Right cardiac atrium (tissue), 5 donors: ENCODE measurements at regions of chr12 and their contacts with region 1.

Region 1: DNA sequence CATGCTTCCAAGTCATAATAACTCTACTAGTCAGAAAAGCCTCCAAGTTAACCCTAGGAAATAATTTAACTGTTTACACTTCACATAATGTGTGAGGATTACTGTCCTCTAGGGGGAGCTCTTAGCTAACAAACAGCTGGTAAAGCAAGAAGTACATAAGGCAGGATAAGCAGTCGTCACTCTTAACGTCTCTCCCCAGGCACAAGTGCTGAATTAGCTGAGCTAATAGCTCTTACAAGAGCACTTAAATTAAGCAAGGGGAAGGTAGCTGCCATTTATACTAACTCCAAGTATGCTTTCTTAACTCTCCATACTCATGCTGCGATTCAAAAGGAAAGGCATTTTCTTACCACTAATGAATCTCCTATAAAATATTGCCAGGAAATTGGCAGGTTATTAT is 79.3 kb upstream of the TSPAN11 start:
- DNase-seq: no peak
- ATAC-seq: peak in 1 of 2 donors; percentile 46
- H3K4me3 ChIP-seq: no peak overlapping the region
- H3K27ac ChIP-seq: no peak overlapping the region
- H3K4me1 ChIP-seq: peaks cover 3% of the 10 kb centered on the region
- H3K27me3 ChIP-seq: no peaks in the 10 kb centered on the region

Region 2: DNA sequence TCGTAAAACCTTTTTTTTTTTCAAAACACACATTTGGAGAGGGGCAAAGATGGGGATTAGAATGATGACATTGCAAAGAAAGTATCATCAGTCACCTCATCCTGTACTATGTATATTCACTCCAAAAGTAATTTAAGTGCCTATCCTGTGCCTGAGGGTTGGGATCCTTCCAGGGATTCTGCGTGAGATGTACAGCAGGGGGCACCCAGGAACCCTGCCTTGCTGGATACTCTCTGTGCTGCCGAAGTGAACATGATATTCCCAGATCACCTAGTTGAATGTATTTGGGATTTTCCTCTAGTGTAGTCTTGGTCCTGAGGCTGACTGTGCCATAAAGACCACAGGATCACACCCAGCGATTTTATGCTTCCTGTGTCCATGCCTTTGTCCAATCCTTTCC is 524.3 kb before region 1 on chr12:
- intact Hi-C with region 1: no loop called
- DNase-seq: no peak
- ATAC-seq: no peak
- H3K4me3 ChIP-seq: no peak overlapping the region
- H3K27ac ChIP-seq: no peak overlapping the region
- H3K4me1 ChIP-seq: no peaks in the 10 kb centered on the region
- H3K27me3 ChIP-seq: no peaks in the 10 kb centered on the region

Region 3: GRCh38 chr12:30725739-30726138 is 121.5 kb before region 1 on chr12:
- intact Hi-C with region 1: no loop called
- DNase-seq: no peak
- ATAC-seq: no peak
- H3K4me3 ChIP-seq: no peak overlapping the region
- H3K27ac ChIP-seq: no peak overlapping the region
- H3K4me1 ChIP-seq: no peaks in the 10 kb centered on the region
- H3K27me3 ChIP-seq: no peaks in the 10 kb centered on the region

Region 4: GRCh38 chr12:30973175-30973574 is 125.9 kb after region 1 on chr12:
- intact Hi-C with region 1: no loop called
- DNase-seq: no peak
- ATAC-seq: no peak
- H3K4me3 ChIP-seq: no peak overlapping the region
- H3K27ac ChIP-seq: no peak overlapping the region
- H3K4me1 ChIP-seq: peaks cover 6% of the 10 kb centered on the region
- H3K27me3 ChIP-seq: no peaks in the 10 kb centered on the region

Region 5: DNA sequence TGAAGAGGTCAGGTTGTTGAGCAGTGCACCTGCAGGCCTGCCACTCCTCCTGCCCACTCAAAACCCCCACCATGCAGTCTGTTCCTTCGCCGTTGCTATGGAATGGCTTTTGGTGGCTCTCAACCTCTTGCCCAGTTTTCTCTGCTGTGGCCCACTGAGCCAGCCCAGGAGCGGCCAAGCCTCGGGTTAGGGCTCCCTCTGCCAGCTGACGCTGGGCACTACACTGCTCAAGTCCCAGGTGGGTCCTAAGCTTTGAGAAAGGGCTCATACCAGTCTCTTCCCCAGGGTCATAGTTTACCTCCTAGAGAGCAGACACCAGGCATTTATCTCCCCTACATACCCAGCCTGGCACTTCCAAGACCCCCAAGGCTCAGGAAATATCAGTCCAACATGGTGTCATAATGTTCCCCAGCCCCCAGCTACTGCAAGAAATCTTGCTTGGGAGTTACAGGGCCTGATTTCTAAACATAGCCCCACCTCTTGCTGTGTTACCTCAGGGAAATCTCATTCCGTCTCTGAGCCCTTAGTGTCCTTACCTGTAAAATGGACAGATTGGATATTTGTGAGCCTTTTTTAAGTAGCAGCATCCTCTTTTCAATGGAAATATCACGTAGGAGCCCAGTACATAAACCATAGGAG is 138.7 kb after region 1 on chr12:
- intact Hi-C with region 1: loop called (anchors 2 to 5 kb)
- DNase-seq: peak; percentile 30 to 76 (median 76)
- ATAC-seq: peak; percentile 61 to 62
- H3K4me3 ChIP-seq: no peak overlapping the region
- H3K27ac ChIP-seq: no peak overlapping the region
- H3K4me1 ChIP-seq: no peaks in the 10 kb centered on the region
- H3K27me3 ChIP-seq: no peaks in the 10 kb centered on the region

Region 6: GRCh38 chr12:31238764-31239387 is 391.6 kb after region 1 on chr12:
- intact Hi-C with region 1: loop called in 2 of 4 experiments (anchors 5 to 10 kb)
- DNase-seq: peak; percentile 53 to 87 (median 62)
- ATAC-seq: peak; percentile 73 to 77
- H3K4me3 ChIP-seq: no peak overlapping the region
- H3K27ac ChIP-seq: no peak overlapping the region
- H3K4me1 ChIP-seq: no peaks in the 10 kb centered on the region
- H3K27me3 ChIP-seq: no peaks in the 10 kb centered on the region

Region 7: GRCh38 chr12:31267966-31268365 is 420.7 kb after region 1 on chr12:
- intact Hi-C with region 1: loop called in 3 of 4 experiments (anchors 5 to 10 kb)
- DNase-seq: no peak
- ATAC-seq: no peak
- H3K4me3 ChIP-seq: no peak overlapping the region
- H3K27ac ChIP-seq: no peak overlapping the region
- H3K4me1 ChIP-seq: no peaks in the 10 kb centered on the region
- H3K27me3 ChIP-seq: no peaks in the 10 kb centered on the region

Region 8: DNA sequence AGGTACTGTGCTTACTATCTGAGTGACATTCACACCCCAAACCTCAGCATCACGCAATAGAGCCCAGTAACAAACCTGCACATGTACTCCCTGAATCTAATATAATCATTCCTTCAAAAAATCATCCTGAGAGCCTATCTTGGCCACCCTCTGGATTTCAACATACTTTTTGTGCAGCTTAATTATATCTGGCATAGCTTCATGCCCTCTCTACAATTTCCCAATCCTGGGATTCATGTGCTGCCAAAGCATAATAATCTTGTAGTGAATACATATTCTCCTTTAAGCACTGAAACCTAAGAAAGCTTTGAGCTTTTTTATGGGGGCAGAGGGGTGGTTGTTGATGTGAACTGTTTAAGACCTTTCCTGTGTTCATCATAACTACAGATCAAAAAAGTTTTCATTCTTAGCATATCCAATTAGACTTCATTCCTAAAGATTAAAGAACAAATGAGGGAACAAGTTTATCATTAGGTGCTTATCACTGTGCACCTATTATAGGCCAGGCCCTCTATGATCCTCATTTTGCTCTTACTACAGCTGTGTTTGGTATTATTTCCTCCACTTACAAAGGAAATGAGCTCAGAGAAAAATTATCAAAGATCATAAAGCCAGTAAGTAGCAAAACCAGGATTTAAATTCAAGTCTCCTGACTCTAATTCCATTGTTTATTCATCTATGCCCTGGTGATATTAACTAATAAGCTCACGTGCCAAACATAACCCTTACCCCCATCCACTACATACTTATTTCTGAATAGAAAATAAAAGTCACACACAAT is 427.5 kb after region 1 on chr12:
- intact Hi-C with region 1: loop called in 3 of 4 experiments (anchors 5 to 10 kb)
- DNase-seq: no peak
- ATAC-seq: no peak
- H3K4me3 ChIP-seq: no peak overlapping the region
- H3K27ac ChIP-seq: no peak overlapping the region
- H3K4me1 ChIP-seq: no peaks in the 10 kb centered on the region
- H3K27me3 ChIP-seq: no peaks in the 10 kb centered on the region